ENCODE measurements at regions of chr3 and their contacts with region 1.

Region 1: DNA sequence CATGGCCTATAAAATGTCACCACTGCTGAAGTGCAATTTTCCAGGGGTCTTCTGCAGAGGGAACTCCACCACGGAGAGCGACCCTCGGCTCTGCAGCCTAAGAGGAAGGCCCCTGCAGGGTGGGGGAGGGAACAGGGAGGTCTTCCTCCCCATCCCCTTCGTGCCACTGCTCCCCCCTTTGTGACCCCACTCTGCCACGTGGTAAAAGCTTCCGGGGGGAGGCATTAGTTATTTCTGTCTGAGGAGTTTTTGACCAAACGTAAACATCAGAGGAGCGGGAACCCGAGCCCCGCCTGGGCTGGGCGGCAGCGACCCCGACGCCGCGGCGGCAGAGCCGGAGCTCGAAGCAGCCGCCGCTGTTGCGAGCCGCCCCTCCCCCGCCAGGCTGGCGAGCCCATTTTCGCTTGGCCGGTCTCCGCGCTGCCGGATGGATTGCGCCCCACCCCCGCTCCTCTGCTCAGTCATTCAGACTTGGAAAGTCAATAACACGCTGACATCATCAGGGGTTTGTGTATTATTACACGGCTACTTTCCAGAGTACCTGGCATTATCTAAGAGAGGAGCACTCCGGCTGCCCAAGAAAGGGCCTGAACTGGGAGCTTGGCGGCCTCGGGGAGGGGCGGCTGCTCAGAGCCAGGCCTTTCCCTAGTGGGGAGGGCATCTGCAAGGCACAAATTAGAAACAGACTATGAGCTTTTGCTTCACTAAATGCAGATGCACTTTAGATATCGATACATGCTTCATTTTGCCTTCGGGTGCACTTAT is 162.5 kb upstream of the TBL1XR1 start:
- DNase-seq: peak; percentile 97
- ATAC-seq: peak; percentile 78
- H3K4me3 Mint-ChIP-seq: peak overlapping the region; percentile 68
- H3K27ac Mint-ChIP-seq: peak overlapping the region; percentile 92
- H3K4me1 Mint-ChIP-seq: peaks cover 56% of the 10 kb centered on the region
- H3K27me3 Mint-ChIP-seq: no peaks in the 10 kb centered on the region

Region 2: DNA sequence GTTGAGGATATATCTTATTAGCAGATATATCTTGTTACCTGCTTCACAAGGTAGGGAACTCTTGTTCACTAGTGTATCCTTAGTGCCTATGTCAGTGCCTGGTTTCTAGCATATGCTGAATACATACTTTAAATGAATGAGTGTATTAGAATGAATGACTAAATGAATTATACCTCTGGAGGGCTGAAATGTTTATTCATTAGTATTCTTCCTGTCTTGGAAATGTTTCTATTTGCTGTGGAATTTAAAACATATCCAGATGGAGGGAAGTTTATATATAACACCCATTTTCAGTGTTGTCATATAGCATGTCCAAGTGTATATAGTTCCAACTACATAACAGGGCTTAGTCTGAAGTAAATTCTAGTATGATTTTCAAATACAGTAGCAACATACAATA is 743.9 kb before region 1 on chr3:
- CTCF ChIA-PET with region 1: no interaction called
- POLR2A ChIA-PET with region 1: no interaction called
- intact Hi-C with region 1: no loop called
- DNase-seq: no peak
- ATAC-seq: no peak
- H3K4me3 Mint-ChIP-seq: no peak overlapping the region
- H3K27ac Mint-ChIP-seq: no peak overlapping the region
- H3K4me1 Mint-ChIP-seq: no peaks in the 10 kb centered on the region
- H3K27me3 Mint-ChIP-seq: no peaks in the 10 kb centered on the region

Region 3: GRCh38 chr3:177057768-177058167 is 302.0 kb before region 1 on chr3:
- CTCF ChIA-PET with region 1: interaction called, 3 read pairs
- POLR2A ChIA-PET with region 1: no interaction called
- intact Hi-C with region 1: loop called (anchors 2 kb)
- DNase-seq: peak; percentile 82
- ATAC-seq: peak; percentile 97
- H3K4me3 Mint-ChIP-seq: no peak overlapping the region
- H3K27ac Mint-ChIP-seq: no peak overlapping the region
- H3K4me1 Mint-ChIP-seq: peaks cover 37% of the 10 kb centered on the region
- H3K27me3 Mint-ChIP-seq: no peaks in the 10 kb centered on the region

Region 4: DNA sequence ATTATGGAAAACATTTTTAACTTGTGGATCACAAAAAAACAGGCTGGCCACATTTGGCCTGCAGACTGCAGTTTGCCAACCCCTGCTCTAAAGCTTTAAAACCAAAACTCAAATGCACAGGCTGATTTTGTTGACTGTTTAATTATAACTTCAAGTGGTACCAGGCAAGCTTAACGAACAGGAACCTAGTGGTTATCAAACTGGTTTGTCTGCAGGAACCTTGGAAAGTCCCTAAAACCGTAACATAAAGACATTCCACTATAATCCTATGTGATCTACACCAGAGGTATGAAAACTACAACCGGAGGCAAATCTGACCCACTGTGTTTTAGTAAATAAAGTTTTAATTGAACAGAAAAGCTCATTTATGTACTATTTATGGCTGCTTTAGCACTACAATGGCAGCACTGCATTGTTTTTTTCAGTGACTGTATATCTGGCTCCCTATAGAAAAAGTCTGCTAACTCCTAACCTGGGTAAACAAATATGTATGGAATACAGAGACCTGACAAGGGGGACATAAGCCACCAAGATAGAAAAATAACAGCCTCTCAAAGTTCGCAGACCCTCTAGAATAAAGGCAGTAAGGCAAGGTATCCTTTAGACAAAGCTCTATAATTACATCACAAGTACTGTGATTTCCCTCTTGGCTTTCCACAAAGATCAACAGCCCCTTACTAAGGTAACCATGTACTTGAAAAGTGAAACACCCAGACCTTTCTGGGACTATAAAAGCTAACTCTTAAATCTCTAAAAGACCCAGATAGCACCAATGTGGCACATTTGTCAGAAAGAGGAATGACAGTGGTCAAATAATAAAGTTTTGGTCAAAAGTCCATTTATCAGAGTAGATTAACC is 214.6 kb before region 1 on chr3:
- CTCF ChIA-PET with region 1: interaction called, 4 read pairs
- POLR2A ChIA-PET with region 1: no interaction called
- intact Hi-C with region 1: loop called (anchors 5 kb)
- DNase-seq: no peak
- ATAC-seq: peak; percentile 26
- H3K4me3 Mint-ChIP-seq: peak overlapping the region; percentile 30
- H3K27ac Mint-ChIP-seq: peak overlapping the region; percentile 59
- H3K4me1 Mint-ChIP-seq: peaks cover 77% of the 10 kb centered on the region
- H3K27me3 Mint-ChIP-seq: no peaks in the 10 kb centered on the region

Region 5: GRCh38 chr3:177314897-177315296 is 44.9 kb before region 1 on chr3:
- CTCF ChIA-PET with region 1: interaction called, 4 read pairs
- POLR2A ChIA-PET with region 1: no interaction called
- intact Hi-C with region 1: loop called (anchors 1 kb)
- DNase-seq: no peak
- ATAC-seq: peak; percentile 72
- H3K4me3 Mint-ChIP-seq: no peak overlapping the region
- H3K27ac Mint-ChIP-seq: no peak overlapping the region
- H3K4me1 Mint-ChIP-seq: peaks cover 23% of the 10 kb centered on the region
- H3K27me3 Mint-ChIP-seq: peaks cover 3% of the 10 kb centered on the region

Region 6: DNA sequence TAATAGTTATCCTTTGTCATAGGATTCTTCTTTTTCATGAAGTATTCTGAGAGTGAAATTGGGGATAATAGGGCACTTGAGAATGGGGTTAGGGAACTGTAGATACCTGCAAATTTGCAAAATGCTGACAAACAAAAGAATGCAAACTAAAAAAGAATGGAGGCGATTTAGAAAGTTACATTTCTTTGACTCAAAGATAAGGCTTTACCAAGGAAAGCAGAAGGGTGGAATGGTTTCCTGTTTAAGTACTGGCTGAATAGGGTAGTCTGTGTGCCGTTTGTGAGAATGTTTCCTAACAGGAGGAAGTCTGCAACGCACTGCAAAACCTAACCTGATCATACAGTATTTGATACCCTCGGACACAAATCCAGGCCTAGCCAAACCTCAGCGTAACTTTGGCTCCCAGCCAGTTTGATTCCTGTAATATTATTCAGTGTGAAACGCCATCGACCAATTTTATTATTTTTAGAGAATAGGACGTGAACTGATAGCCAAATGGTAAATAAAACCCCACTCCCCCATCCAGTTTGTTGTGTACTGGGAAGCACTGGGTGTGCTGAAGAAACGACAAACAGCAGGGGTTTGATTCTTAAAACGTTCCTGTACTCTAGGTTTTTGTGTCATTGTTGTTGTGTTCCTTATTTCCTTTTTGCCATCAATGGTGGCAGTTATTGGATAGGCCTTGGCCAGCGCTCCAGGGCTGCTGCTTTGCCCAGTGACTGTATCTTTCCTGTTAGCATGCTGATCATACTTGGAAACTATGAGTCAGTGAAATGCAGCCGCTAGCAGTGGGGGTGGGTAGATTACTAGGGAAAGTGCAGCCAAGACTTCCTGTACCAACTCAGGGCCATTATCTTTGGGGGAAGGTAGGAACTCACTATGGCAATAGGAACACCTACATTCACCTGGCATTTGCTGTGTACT is 14.5 kb before region 1 on chr3:
- CTCF ChIA-PET with region 1: no interaction called
- POLR2A ChIA-PET with region 1: interaction called, 8 read pairs
- intact Hi-C with region 1: loop called (anchors 1 kb)
- DNase-seq: peak; percentile 84
- ATAC-seq: peak; percentile 93
- H3K4me3 Mint-ChIP-seq: peak overlapping the region; percentile 44
- H3K27ac Mint-ChIP-seq: peak overlapping the region; percentile 88
- H3K4me1 Mint-ChIP-seq: peaks cover 40% of the 10 kb centered on the region
- H3K27me3 Mint-ChIP-seq: no peaks in the 10 kb centered on the region

Region 7: GRCh38 chr3:177426878-177427495 is 67.2 kb after region 1 on chr3:
- CTCF ChIA-PET with region 1: interaction called, 3 read pairs
- POLR2A ChIA-PET with region 1: no interaction called
- intact Hi-C with region 1: loop called in 1 of 2 experiments (anchors 1 kb)
- DNase-seq: peak; percentile 77
- ATAC-seq: peak; percentile 97
- H3K4me3 Mint-ChIP-seq: peak overlapping the region; percentile 47
- H3K27ac Mint-ChIP-seq: peak overlapping the region; percentile 92
- H3K4me1 Mint-ChIP-seq: peaks cover 32% of the 10 kb centered on the region
- H3K27me3 Mint-ChIP-seq: peaks cover 3% of the 10 kb centered on the region

Region 8: GRCh38 chr3:177777699-177778098 is 417.9 kb after region 1 on chr3:
- CTCF ChIA-PET with region 1: no interaction called
- POLR2A ChIA-PET with region 1: no interaction called
- intact Hi-C with region 1: loop called in 1 of 2 experiments (anchors 10 kb)
- DNase-seq: peak; percentile 63
- ATAC-seq: peak; percentile 77
- H3K4me3 Mint-ChIP-seq: no peak overlapping the region
- H3K27ac Mint-ChIP-seq: no peak overlapping the region
- H3K4me1 Mint-ChIP-seq: peaks cover 14% of the 10 kb centered on the region
- H3K27me3 Mint-ChIP-seq: no peaks in the 10 kb centered on the region